Natural killer cell (primary cell): ENCODE measurements at regions of chr19 and their contacts with region 1.

Region 1: GRCh38 chr19:56333505-56333904 is 18.9 kb upstream of the ZSCAN5A start:
- DNase-seq: peak in 1 of 2 donors; percentile 73
- ATAC-seq: peak; percentile 75 to 87 (median 85)
- H3K4me3 ChIP-seq: no peak overlapping the region
- H3K4me3 Mint-ChIP-seq: no peak overlapping the region
- H3K27ac ChIP-seq: no peak overlapping the region
- H3K27ac Mint-ChIP-seq: no peak overlapping the region
- H3K4me1 ChIP-seq: no peaks in the 10 kb centered on the region
- H3K4me1 Mint-ChIP-seq: no peaks in the 10 kb centered on the region
- H3K27me3 ChIP-seq: no peaks in the 10 kb centered on the region
- H3K27me3 Mint-ChIP-seq: no peaks in the 10 kb centered on the region
- CTCF ChIP-seq: peak; percentile 90

Region 2: GRCh38 chr19:56066152-56067023 is 267.1 kb before region 1 on chr19:
- intact Hi-C with region 1: loop called (anchors 1 kb)
- DNase-seq: peak; percentile 61 to 80
- ATAC-seq: peak; percentile 74 to 89 (median 86)
- H3K4me3 ChIP-seq: peak overlapping the region; percentile 18
- H3K4me3 Mint-ChIP-seq: peak overlapping the region; percentile 82
- H3K27ac ChIP-seq: no peak overlapping the region
- H3K27ac Mint-ChIP-seq: peak overlapping the region in 1 of 2 donors; percentile 36
- H3K4me1 ChIP-seq: peaks cover 11% of the 10 kb centered on the region
- H3K4me1 Mint-ChIP-seq: peaks cover 12 to 13% of the 10 kb centered on the region in 2 donors
- H3K27me3 ChIP-seq: no peaks in the 10 kb centered on the region
- H3K27me3 Mint-ChIP-seq: peaks cover 0 to 7% of the 10 kb centered on the region in 2 donors
- CTCF ChIP-seq: peak; percentile 95

Region 3: DNA sequence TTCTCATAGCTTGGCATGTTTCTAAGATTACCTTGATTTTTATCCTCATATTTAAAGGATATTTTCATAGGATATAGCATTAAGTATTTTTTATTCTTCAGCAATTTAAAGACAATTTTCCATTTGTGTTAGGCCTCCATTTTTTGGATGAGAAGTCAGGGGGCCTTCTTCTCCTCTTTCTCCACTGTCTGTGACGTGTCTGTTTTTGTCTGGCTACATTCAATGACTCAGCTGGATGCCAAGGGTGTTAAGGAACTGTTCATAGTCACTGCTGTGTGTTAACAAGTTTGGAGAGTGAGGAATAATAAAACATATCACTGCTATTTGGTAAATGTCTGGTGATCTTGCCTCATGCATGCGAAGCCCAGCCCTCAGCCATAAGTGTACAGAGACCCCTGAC is 23.4 kb after region 1 on chr19:
- intact Hi-C with region 1: no loop called
- DNase-seq: no peak
- ATAC-seq: no peak
- H3K4me3 ChIP-seq: no peak overlapping the region
- H3K4me3 Mint-ChIP-seq: no peak overlapping the region
- H3K27ac ChIP-seq: no peak overlapping the region
- H3K27ac Mint-ChIP-seq: no peak overlapping the region
- H3K4me1 ChIP-seq: no peaks in the 10 kb centered on the region
- H3K4me1 Mint-ChIP-seq: no peaks in the 10 kb centered on the region
- H3K27me3 ChIP-seq: no peaks in the 10 kb centered on the region
- H3K27me3 Mint-ChIP-seq: no peaks in the 10 kb centered on the region
- CTCF ChIP-seq: no peak